Activated B cell treated with CpG ODN at 0.5 μM for 24 hours (primary cell): ENCODE measurements at regions of chr2 and their contacts with region 1.

Region 1: GRCh38 chr2:219057709-219058540 is 2.8 kb downstream of the IHH start:
- DNase-seq: peak; percentile 72
- ATAC-seq: peak; percentile 99
- H3K4me3 Mint-ChIP-seq: peak overlapping the region; percentile 57
- H3K27ac Mint-ChIP-seq: no peak overlapping the region
- H3K4me1 Mint-ChIP-seq: peaks cover 32% of the 10 kb centered on the region
- H3K27me3 Mint-ChIP-seq: peaks cover 58% of the 10 kb centered on the region
- CTCF ChIP-seq: peak; percentile 47

Region 2: GRCh38 chr2:218892693-218893348 is 165.1 kb before region 1 on chr2:
- CTCF ChIA-PET with region 1: no interaction called
- POLR2A ChIA-PET with region 1: no interaction called
- intact Hi-C with region 1: no loop called
- DNase-seq: peak; percentile 91
- ATAC-seq: peak; percentile 66
- H3K4me3 Mint-ChIP-seq: peak overlapping the region; percentile 80
- H3K27ac Mint-ChIP-seq: peak overlapping the region; percentile 92
- H3K4me1 Mint-ChIP-seq: peaks cover 59% of the 10 kb centered on the region
- H3K27me3 Mint-ChIP-seq: no peaks in the 10 kb centered on the region
- CTCF ChIP-seq: no peak

Region 3: GRCh38 chr2:218995972-218996711 is 61.8 kb before region 1 on chr2:
- CTCF ChIA-PET with region 1: interaction called, 3 read pairs
- POLR2A ChIA-PET with region 1: no interaction called
- intact Hi-C with region 1: loop called (anchors 5 kb)
- DNase-seq: peak; percentile 70
- ATAC-seq: peak; percentile 80
- H3K4me3 Mint-ChIP-seq: no peak overlapping the region
- H3K27ac Mint-ChIP-seq: no peak overlapping the region
- H3K4me1 Mint-ChIP-seq: peaks cover 16% of the 10 kb centered on the region
- H3K27me3 Mint-ChIP-seq: peaks cover 62% of the 10 kb centered on the region
- CTCF ChIP-seq: peak; percentile 49

Region 4: DNA sequence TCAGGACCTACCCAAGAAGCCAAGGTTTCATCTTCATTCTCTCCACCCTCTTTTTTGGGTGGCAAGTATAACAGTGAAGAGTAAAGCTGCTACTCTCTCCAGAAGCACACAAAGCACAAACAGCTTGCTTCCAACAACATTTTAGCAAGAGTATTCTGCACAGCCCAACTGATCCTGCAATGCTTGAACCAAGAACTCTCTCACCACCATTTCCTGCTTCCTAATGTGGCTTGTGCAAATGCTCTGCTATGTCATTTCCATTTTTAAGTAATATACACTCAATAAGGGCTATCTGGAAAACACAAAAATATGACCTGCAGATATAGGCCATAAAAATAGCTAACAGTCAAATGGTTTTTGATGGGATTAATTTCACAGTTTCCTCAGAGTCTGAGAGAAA is 26.9 kb after region 1 on chr2:
- CTCF ChIA-PET with region 1: no interaction called
- POLR2A ChIA-PET with region 1: no interaction called
- intact Hi-C with region 1: no loop called
- DNase-seq: no peak
- ATAC-seq: no peak
- H3K4me3 Mint-ChIP-seq: no peak overlapping the region
- H3K27ac Mint-ChIP-seq: no peak overlapping the region
- H3K4me1 Mint-ChIP-seq: peaks cover 13% of the 10 kb centered on the region
- H3K27me3 Mint-ChIP-seq: no peaks in the 10 kb centered on the region
- CTCF ChIP-seq: no peak

Region 5: DNA sequence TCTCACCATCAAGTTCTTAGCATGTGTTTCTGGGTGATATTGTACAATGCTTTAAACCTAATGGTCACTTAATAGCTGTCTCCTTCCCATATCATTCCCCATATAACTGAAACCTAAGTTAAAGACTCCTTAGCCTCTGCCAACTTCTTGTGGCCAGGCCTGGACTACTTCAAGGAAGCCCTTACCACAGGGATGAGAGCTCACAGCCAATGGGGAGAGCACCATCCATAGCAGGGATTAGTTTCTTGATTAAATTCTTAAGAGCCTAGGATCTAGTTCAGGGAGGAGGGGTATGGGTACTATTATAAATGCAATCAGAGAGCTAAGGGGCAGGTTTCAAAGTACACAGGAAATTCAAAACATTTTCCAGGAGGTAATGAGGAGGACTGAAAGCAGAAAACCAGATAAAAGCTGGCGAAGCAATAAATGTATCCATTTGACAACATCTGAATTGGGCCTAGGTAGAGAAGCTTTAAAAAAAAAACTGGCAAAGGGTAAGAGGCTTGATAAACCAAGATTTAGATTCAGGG is 37.5 kb after region 1 on chr2:
- CTCF ChIA-PET with region 1: no interaction called
- POLR2A ChIA-PET with region 1: no interaction called
- intact Hi-C with region 1: no loop called
- DNase-seq: no peak
- ATAC-seq: no peak
- H3K4me3 Mint-ChIP-seq: no peak overlapping the region
- H3K27ac Mint-ChIP-seq: no peak overlapping the region
- H3K4me1 Mint-ChIP-seq: no peaks in the 10 kb centered on the region
- H3K27me3 Mint-ChIP-seq: no peaks in the 10 kb centered on the region
- CTCF ChIP-seq: no peak

Region 6: DNA sequence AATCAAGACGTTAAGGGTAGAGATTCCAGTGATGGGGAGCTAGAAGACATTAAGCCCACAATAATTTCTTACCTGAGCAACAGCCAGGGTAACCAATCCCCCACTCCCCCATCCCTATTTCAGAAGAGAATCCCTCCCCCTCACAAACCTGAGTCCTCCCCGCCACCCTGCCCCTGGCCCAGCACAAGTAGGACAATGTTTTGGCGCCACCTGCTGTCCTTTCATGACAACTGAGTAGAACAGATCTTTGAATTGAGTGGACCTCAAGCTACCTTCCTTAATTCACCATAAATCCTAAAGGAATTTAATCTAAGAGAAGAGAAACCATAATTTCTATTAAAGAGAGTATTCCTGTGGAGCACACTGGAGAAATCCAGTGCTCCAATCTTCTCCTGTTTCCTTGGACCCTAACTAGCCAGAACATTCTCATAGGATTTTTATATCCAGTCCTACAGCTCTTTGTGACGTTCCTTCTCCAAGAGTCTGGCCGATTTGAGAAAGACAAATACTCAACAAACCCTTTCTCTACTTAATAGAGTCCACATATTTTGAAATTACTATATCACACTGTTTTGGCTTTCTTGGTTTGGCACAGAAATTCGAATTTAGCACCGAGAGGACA is 61.6 kb after region 1 on chr2:
- CTCF ChIA-PET with region 1: interaction called, 39 read pairs
- POLR2A ChIA-PET with region 1: no interaction called
- intact Hi-C with region 1: loop called (anchors 1 kb)
- DNase-seq: peak; percentile 27
- ATAC-seq: peak; percentile 50
- H3K4me3 Mint-ChIP-seq: no peak overlapping the region
- H3K27ac Mint-ChIP-seq: no peak overlapping the region
- H3K4me1 Mint-ChIP-seq: no peaks in the 10 kb centered on the region
- H3K27me3 Mint-ChIP-seq: no peaks in the 10 kb centered on the region
- CTCF ChIP-seq: no peak

Region 7: GRCh38 chr2:219155054-219155644 is 97.2 kb after region 1 on chr2:
- CTCF ChIA-PET with region 1: interaction called, 53 read pairs
- POLR2A ChIA-PET with region 1: interaction called, 3 read pairs
- intact Hi-C with region 1: loop called (anchors 1 kb)
- DNase-seq: no peak
- ATAC-seq: peak; percentile 27
- H3K4me3 Mint-ChIP-seq: no peak overlapping the region
- H3K27ac Mint-ChIP-seq: no peak overlapping the region
- H3K4me1 Mint-ChIP-seq: peaks cover 7% of the 10 kb centered on the region
- H3K27me3 Mint-ChIP-seq: no peaks in the 10 kb centered on the region
- CTCF ChIP-seq: peak; percentile 77

Region 8: GRCh38 chr2:219294356-219295351 is 236.7 kb after region 1 on chr2:
- CTCF ChIA-PET with region 1: interaction called, 8 read pairs
- POLR2A ChIA-PET with region 1: no interaction called
- intact Hi-C with region 1: loop called (anchors 1 kb)
- DNase-seq: peak; percentile 91
- ATAC-seq: peak; percentile 95
- H3K4me3 Mint-ChIP-seq: peak overlapping the region; percentile 78
- H3K27ac Mint-ChIP-seq: peak overlapping the region; percentile 65
- H3K4me1 Mint-ChIP-seq: peaks cover 24% of the 10 kb centered on the region
- H3K27me3 Mint-ChIP-seq: peaks cover 6% of the 10 kb centered on the region
- CTCF ChIP-seq: peak; percentile 64

Region 9: GRCh38 chr2:219530048-219530963 is 472.4 kb after region 1 on chr2:
- CTCF ChIA-PET with region 1: no interaction called
- POLR2A ChIA-PET with region 1: no interaction called
- intact Hi-C with region 1: loop called (anchors 5 kb)
- DNase-seq: peak; percentile 73
- ATAC-seq: peak; percentile 97
- H3K4me3 Mint-ChIP-seq: no peak overlapping the region
- H3K27ac Mint-ChIP-seq: no peak overlapping the region
- H3K4me1 Mint-ChIP-seq: no peaks in the 10 kb centered on the region
- H3K27me3 Mint-ChIP-seq: peaks cover 60% of the 10 kb centered on the region
- CTCF ChIP-seq: peak; percentile 91